Activated B cell treated with CpG ODN at 0.5 μM for 24 hours (primary cell): ENCODE measurements at regions of chr2 and their contacts with region 1.

Region 1: GRCh38 chr2:110755491-110756078 is 23.2 kb downstream of the ACOXL start:
- DNase-seq: no peak
- ATAC-seq: no peak
- H3K4me3 Mint-ChIP-seq: no peak overlapping the region
- H3K27ac Mint-ChIP-seq: no peak overlapping the region
- H3K4me1 Mint-ChIP-seq: no peaks in the 10 kb centered on the region
- H3K27me3 Mint-ChIP-seq: peaks cover 21% of the 10 kb centered on the region
- CTCF ChIP-seq: peak; percentile 22

Region 2: GRCh38 chr2:110157153-110157793 is 598.3 kb before region 1 on chr2:
- CTCF ChIA-PET with region 1: no interaction called
- POLR2A ChIA-PET with region 1: no interaction called
- intact Hi-C with region 1: loop called (anchors 5 kb)
- DNase-seq: no peak
- ATAC-seq: peak; percentile 40
- H3K4me3 Mint-ChIP-seq: no peak overlapping the region
- H3K27ac Mint-ChIP-seq: no peak overlapping the region
- H3K4me1 Mint-ChIP-seq: peaks cover 6% of the 10 kb centered on the region
- H3K27me3 Mint-ChIP-seq: no peaks in the 10 kb centered on the region
- CTCF ChIP-seq: no peak